Activated CD4-positive, alpha-beta T cell treated with anti-CD3 and anti-CD28 coated beads, Interleukin-2, amount 10 ng/mL, durations not matched to agents 24 days and 14 days (primary cell): ENCODE measurements at regions of chr9 and their contacts with region 1.

Region 1: DNA sequence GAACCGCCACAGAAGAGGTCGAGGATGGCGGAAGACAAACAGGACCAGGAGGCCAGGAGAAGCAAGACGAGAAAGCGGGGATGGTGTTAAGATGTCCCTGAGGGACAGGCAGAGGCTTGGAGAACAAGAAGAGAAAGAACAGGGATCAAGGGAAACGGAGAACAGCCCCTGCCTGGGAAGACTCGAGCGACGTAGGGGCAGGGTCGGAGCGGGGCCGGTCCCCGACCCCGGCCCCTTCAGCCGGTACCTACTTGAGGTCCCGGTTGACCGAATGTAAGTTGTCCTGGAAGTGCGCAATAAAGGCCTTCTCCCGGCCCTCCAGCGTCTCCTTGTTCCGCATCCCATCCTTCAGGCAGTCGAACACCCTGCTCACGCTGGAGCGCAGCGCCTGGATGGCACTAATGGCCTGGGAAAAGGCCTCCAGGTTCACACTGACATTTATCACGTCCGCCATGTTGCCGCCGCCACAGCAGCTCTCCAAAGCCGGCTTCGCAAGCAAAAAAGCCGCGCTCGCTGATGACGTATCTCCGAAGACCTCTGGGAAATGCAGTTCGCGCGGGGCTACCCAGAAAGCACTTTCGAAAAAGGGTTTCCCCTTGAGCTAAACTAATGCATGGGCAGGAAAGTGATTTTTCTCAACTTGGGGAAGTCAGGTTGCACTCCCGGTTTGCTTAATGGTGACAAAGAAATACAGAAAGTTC is at the start of gene MED27:
- DNase-seq: peak; percentile 98
- H3K4me3 Mint-ChIP-seq: peak within 1 kb of the TSS; percentile 99
- H3K27ac Mint-ChIP-seq: peak within 1 kb of the TSS; percentile 92
- H3K4me1 Mint-ChIP-seq: peaks cover 35% of the 10 kb centered on the region
- H3K27me3 Mint-ChIP-seq: peaks cover 3% of the 10 kb centered on the region
- total RNA-seq, gene MED27: 40.9 and 41.8 TPM in 2 replicates

Region 2: DNA sequence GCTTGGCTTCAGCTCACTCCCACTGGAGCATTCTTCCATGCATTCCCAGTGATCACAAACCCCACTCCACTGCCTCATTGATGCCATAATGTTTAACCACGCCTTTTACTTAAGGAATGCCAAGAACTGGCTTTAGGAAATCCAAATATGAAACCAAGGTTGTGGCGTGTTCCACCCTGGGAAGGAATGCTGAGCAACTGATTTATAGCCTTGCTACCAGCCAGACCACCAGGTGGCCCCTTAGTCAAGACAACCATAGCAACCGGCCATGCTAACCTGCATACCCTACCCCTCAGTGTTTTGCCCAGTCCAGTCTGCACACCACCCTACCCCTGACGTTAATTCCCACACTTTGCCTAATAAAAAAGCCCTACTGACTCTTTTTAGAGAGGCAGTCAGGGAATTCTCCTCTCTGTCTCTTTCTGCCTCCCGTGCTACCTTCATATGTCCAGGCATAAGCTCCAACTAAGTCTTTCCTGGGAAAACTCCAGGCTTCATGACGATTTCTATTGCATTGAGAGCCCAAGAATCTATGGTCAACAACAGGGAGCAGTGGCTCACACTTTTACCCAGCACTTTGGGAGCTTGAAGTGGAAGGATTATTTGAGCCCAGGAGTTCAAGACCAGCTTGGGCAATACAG is 712.7 kb before region 1 on chr9:
- intact Hi-C with region 1: loop called (anchors 10 kb)
- DNase-seq: no peak
- H3K4me3 Mint-ChIP-seq: no peak overlapping the region
- H3K27ac Mint-ChIP-seq: no peak overlapping the region
- H3K4me1 Mint-ChIP-seq: peaks cover 4% of the 10 kb centered on the region
- H3K27me3 Mint-ChIP-seq: peaks cover 3% of the 10 kb centered on the region

Region 3: GRCh38 chr9:131839281-131840084 is 240.1 kb before region 1 on chr9:
- intact Hi-C with region 1: loop called (anchors 2 kb)
- DNase-seq: peak; percentile 92
- H3K4me3 Mint-ChIP-seq: peak overlapping the region; percentile 72
- H3K27ac Mint-ChIP-seq: peak overlapping the region; percentile 99
- H3K4me1 Mint-ChIP-seq: peaks cover 20% of the 10 kb centered on the region
- H3K27me3 Mint-ChIP-seq: no peaks in the 10 kb centered on the region

Region 4: DNA sequence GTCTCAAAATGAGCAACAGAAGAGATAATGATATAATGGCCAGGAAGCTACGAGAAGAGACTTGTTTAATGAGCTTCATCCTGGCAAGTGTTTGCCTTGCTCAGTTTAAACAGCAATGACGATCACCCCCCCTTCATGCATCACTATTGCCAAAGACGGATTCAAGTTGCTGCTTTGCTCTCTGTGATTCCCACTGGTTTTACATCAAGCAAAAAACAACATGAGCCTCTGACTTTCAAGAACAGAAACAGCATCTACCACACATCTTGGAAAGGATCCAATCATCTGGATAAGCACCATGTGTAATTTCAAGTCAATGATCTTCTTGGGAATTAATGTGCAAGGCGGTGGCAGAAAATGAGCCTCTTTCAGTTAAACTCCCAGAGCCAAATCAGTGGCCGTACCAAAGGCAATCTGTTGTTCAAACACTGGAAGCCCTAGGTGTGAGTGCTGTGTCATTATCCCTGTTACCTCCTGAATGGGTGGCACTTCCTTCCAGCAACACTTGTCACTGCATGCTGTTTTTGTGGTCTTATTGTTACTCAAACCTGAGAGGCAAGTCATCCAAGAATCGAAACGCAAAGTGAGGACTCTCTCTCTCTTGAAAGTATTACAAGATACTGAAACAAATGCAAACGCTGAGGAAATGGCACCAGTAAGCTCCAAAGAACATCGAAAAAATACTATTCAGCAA is 72.7 kb before region 1 on chr9:
- intact Hi-C with region 1: loop called (anchors 5 kb)
- DNase-seq: peak; percentile 80
- H3K4me3 Mint-ChIP-seq: peak overlapping the region; percentile 37
- H3K27ac Mint-ChIP-seq: peak overlapping the region; percentile 38
- H3K4me1 Mint-ChIP-seq: peaks cover 47% of the 10 kb centered on the region
- H3K27me3 Mint-ChIP-seq: peaks cover 2% of the 10 kb centered on the region

Region 5: DNA sequence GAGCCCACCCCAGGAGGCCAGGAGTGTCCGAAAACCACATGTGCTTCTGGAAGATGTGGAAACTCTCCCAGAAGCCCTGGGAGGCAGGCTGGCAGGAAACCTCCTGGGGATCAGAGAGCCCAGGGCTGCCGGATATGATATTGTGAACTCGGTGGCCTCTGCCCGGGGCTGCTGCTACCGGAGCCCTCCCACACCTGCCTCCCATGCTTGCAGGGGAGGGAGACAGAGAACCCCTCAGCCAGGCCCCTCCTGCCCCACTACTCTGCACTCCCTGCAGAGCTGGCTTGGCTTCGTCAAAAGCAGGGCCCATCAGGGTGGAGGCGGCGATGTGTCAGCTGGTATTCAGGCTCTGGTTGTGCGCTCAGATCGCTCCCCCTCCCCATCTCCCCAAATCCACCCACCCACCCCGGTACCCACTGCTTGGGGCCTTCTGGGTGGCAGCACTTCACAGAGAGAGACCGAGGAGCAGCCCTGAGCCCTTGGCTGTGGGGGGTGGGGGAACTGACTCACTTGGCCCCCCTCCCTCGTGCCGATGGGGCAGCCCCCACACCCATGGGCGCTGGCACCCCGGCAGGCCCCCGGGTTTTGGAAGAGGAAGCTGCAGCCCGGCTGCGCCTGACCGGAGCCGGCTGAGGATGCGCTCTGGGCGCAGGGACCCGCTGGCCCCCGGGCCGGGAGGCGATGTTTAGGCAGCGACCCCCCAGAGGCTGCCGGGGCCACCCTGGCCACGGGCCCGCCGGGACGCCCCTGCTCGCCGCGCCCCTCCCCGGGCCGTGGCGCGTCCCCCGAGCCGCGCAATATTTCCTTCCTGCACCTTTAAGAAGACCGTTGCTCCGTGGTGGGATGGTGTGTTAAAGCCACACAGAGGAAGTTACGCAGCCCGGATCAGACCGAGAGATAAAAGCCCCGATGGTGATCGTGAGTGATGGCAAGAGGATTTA is 81.5 kb after region 1 on chr9:
- intact Hi-C with region 1: loop called (anchors 2 kb)
- DNase-seq: peak; percentile 90
- H3K4me3 Mint-ChIP-seq: peak overlapping the region; percentile 88
- H3K27ac Mint-ChIP-seq: peak overlapping the region; percentile 77
- H3K4me1 Mint-ChIP-seq: peaks cover 10% of the 10 kb centered on the region
- H3K27me3 Mint-ChIP-seq: peaks cover 60% of the 10 kb centered on the region

Region 6: GRCh38 chr9:132240753-132241493 is 161.4 kb after region 1 on chr9:
- intact Hi-C with region 1: loop called (anchors 1 kb)
- DNase-seq: peak; percentile 99
- H3K4me3 Mint-ChIP-seq: peak overlapping the region; percentile 95
- H3K27ac Mint-ChIP-seq: peak overlapping the region; percentile 90
- H3K4me1 Mint-ChIP-seq: peaks cover 14% of the 10 kb centered on the region
- H3K27me3 Mint-ChIP-seq: peaks cover 25% of the 10 kb centered on the region